ENCODE measurements at regions of chr16 and their contacts with region 1.

Region 1: DNA sequence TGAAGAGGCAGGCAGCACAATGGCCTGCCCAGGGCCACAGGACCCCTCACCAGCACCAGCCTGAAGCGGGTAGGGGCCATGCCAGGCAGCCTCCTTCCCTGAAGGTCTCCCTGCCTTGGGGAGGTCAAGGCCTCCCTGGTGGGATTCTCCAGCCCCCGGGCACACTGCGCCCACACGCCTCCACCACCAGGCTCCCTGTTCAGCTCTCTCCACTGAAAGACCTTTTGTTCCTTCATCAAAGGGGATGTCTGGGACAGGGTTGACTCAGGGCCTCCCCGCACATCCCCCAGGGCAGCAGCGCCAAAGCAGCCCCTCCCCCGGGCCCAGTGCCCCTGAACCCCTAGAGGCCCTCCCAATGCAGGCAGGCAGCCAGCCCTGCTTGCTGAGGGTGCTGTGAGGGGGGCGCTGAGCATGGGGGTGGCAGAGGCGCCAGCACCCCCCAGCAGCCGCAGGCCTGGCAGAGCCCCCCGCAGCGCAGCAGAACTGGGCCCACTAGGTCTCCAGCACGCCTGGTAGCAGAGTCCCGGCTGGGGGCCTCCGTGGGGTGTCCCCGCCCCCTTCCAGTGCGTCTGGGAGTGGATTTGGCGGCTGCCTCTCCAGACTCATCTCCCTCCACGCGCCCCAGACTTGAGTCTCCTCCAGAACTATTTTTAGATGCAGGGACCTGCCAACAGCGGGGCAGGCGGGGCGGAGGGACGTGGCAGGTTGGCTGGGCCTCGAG is 13.1 kb downstream of the BCAR1 start:
- DNase-seq: peak in 1 of 2 donors; percentile 94
- H3K4me3 ChIP-seq: no peak overlapping the region
- CTCF ChIP-seq: no peak
- POLR2A ChIP-seq: no peak

Region 2: GRCh38 chr16:75385507-75386152 is 147.3 kb after region 1 on chr16:
- intact Hi-C with region 1: loop called (anchors 5 kb)
- DNase-seq: peak in 1 of 2 donors; percentile 31
- H3K4me3 ChIP-seq: no peak overlapping the region
- CTCF ChIP-seq: peak in 1 of 3 donors; percentile 30
- POLR2A ChIP-seq: no peak

Region 3: DNA sequence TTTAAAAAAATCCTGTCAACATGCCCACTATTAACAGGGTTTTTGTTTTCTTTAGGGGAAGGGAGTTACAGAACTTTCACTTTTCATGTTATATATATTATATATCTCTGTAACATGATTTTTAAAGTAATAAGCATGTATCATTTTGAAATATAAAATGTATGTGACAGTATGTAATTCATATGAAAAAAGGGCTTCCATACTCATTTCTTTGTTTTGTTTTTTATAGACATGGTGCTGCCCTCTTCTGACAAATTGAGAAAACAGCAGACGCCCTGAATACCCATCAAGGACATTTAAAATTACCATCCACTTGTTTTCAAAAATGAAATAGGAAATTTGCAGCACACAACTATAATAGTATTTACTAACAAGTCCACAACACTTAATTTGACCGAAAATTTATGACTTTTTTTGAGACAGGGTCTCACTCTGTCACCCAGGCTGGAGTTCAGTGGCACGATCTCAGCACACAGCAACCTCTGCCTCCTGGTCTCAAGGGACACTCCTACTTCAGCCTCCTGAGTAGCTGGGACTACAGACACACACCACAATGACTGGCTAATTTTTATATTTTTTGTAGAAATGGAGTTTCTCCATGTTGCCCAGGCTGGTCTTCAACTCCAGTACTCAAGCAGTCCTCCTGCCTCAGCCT is 164.7 kb after region 1 on chr16:
- intact Hi-C with region 1: loop called (anchors 5 kb)
- DNase-seq: no peak
- H3K4me3 ChIP-seq: no peak overlapping the region
- CTCF ChIP-seq: no peak
- POLR2A ChIP-seq: no peak

Region 4: DNA sequence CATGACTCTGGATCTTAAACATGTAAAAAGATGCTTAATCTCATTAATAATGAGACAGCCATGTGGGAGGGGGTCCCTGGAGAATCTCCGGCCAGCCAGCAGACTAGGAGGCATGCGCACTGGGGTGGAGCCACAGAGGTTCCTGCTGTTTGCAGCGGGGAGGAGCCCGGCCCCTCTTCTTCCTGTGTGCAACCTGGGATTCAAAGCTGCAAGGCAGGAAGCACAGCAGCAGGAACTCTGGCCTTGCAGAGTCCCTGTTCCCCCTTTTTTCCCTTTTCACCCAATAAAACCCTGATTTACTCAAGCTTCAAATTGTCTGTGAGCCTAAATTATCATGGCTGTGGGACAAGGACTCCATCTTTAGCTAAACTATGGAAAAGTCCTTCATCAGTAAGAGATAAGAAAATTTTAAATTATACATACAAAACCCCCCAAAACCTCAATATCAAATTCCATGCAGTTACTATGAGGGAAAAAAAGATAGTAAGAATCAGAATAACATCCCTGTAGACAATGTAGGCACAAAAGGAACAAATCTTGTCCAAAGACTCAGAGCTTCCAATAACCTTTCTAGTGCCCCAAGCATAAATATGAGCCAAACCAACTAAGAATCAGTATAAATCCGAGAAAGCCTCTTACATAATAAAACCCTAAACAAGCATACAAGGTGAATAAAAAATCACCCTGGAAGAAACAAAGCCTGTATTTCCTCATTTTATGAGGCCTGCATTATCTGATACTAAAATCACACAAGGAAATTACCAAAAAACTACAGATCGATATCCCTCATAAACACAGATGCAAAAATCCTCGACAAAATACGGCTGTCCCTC is 182.9 kb after region 1 on chr16:
- intact Hi-C with region 1: no loop called
- DNase-seq: peak; percentile 49 to 93
- H3K4me3 ChIP-seq: no peak overlapping the region
- CTCF ChIP-seq: no peak
- POLR2A ChIP-seq: no peak

Region 5: GRCh38 chr16:75854152-75854551 is 615.9 kb after region 1 on chr16:
- intact Hi-C with region 1: no loop called
- DNase-seq: no peak
- H3K4me3 ChIP-seq: no peak overlapping the region
- CTCF ChIP-seq: no peak
- POLR2A ChIP-seq: no peak

Measured in lower leg skin (tissue), 4 donors.